ENCODE measurements at regions of chr6 and their contacts with region 1.

Region 1: DNA sequence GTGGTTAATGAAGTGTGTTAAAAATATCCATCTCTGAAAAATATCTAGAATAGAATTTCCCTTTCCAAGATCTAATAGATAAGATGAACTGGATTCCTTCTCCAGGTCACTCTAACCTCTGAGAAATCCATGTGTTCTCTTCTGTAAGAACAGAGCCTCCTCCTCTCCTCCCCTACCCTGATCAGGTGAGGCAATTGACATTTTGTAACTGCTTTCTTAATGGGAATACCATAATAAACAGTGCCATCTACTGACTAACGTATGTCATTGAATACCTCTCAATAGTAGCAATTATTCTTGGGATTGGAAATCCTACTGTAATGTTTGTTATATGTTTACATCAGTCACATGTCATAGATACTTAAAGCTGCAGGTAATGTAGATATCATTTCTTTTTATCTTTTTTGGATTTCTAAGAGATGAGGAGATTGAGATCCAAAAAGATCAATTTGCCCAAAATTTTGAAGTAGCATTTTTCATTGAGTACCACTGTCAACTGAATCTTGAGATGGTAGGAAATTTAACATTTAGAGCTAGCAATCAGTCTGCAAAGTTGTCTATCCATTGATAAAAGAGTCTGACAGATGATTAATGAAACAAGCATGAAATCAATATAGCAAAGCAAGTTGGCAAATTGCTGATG is 365.8 kb upstream of the HSF2 start:
- DNase-seq: no peak
- ATAC-seq: peak; percentile 90 to 91
- H3K4me3 ChIP-seq: no peak overlapping the region
- H3K27ac ChIP-seq: no peak overlapping the region
- H3K4me1 ChIP-seq: no peaks in the 10 kb centered on the region
- H3K27me3 ChIP-seq: no peaks in the 10 kb centered on the region
- CTCF ChIP-seq: peak; percentile 38 to 69 (median 63)
- POLR2A ChIP-seq: no peak

Region 2: GRCh38 chr6:121055572-121056163 is 978.0 kb before region 1 on chr6:
- in situ Hi-C with region 1: loop called in 1 of 4 experiments (anchors 25 kb)
- intact Hi-C with region 1: no loop called
- DNase-seq: no peak
- ATAC-seq: peak; percentile 51 to 52
- H3K4me3 ChIP-seq: no peak overlapping the region
- H3K27ac ChIP-seq: no peak overlapping the region
- H3K4me1 ChIP-seq: no peaks in the 10 kb centered on the region
- H3K27me3 ChIP-seq: no peaks in the 10 kb centered on the region
- CTCF ChIP-seq: peak in 3 of 5 experiments; percentile 42 to 53 (median 45)
- POLR2A ChIP-seq: no peak

Region 3: GRCh38 chr6:121726596-121726995 is 307.1 kb before region 1 on chr6:
- in situ Hi-C with region 1: no loop called
- intact Hi-C with region 1: no loop called
- DNase-seq: no peak
- ATAC-seq: no peak
- H3K4me3 ChIP-seq: no peak overlapping the region
- H3K27ac ChIP-seq: peak overlapping the region in 1 of 4 donors; percentile 16
- H3K4me1 ChIP-seq: peaks cover 0 to 8% of the 10 kb centered on the region in 2 donors
- H3K27me3 ChIP-seq: no peaks in the 10 kb centered on the region
- CTCF ChIP-seq: no peak
- POLR2A ChIP-seq: no peak

Region 4: DNA sequence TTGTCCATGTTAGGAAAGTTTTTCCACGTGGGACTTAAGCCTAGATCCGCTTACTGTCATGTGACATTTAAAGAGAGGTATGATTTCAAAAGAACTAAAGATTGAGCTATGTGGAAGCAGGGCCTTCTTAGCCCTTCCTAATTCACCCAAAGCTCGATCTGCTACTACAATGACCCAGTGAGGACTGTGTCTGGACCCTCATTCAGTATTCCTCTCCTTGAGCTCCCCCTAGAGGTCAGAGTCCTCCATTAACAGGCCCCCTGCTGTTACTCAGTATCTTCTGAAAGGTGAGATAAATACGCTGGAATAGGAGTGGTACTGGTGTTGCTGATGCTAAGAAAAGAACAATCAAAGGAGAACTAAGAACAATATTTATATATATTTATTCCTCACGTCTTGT is 184.2 kb before region 1 on chr6:
- in situ Hi-C with region 1: no loop called
- intact Hi-C with region 1: loop called (anchors 5 kb)
- DNase-seq: peak in 1 of 2 donors; percentile 43
- ATAC-seq: peak; percentile 74 to 81
- H3K4me3 ChIP-seq: no peak overlapping the region
- H3K27ac ChIP-seq: peak overlapping the region in 2 of 4 donors; percentile 1 to 9
- H3K4me1 ChIP-seq: no peaks in the 10 kb centered on the region
- H3K27me3 ChIP-seq: no peaks in the 10 kb centered on the region
- CTCF ChIP-seq: peak; percentile 55 to 70 (median 58)
- POLR2A ChIP-seq: no peak

Region 5: GRCh38 chr6:122184401-122184827 is 150.8 kb after region 1 on chr6:
- in situ Hi-C with region 1: loop called in 1 of 4 experiments (anchors 10 kb)
- intact Hi-C with region 1: no loop called
- DNase-seq: no peak
- ATAC-seq: peak in 1 of 2 donors; percentile 49
- H3K4me3 ChIP-seq: peak overlapping the region in 1 of 4 donors; percentile 21
- H3K27ac ChIP-seq: no peak overlapping the region
- H3K4me1 ChIP-seq: peaks cover 0 to 3% of the 10 kb centered on the region in 2 donors
- H3K27me3 ChIP-seq: no peaks in the 10 kb centered on the region
- CTCF ChIP-seq: peak; percentile 14 to 52 (median 40)
- POLR2A ChIP-seq: no peak

Measured in gastrocnemius medialis (tissue), 4 donors.